ENCODE measurements at regions of chrX and their contacts with region 1.

Region 1: DNA sequence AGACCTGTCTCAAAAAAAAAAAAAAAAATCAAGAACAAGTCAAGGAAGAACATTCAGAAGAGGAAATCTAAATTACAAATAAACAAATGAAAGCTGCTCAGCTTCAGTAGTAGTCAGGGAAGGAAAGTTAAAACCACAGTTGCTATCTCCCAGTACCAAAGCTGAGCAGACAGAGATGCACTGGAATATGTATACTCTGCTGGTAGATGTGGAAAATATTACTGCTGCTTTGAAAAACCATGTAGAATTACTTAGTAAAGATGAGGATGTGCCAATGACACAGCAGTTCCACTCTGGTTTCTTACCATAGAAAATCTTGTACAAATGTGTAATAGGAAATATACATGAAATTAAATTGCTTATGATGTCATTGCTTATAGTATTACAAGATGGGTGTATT is 25.1 kb upstream of the PRKX start:
- DNase-seq: no peak
- H3K4me3 Mint-ChIP-seq: no peak overlapping the region
- H3K27ac Mint-ChIP-seq: peak overlapping the region; percentile 88
- H3K4me1 Mint-ChIP-seq: peaks cover 13% of the 10 kb centered on the region
- H3K27me3 Mint-ChIP-seq: no peaks in the 10 kb centered on the region

Region 2: DNA sequence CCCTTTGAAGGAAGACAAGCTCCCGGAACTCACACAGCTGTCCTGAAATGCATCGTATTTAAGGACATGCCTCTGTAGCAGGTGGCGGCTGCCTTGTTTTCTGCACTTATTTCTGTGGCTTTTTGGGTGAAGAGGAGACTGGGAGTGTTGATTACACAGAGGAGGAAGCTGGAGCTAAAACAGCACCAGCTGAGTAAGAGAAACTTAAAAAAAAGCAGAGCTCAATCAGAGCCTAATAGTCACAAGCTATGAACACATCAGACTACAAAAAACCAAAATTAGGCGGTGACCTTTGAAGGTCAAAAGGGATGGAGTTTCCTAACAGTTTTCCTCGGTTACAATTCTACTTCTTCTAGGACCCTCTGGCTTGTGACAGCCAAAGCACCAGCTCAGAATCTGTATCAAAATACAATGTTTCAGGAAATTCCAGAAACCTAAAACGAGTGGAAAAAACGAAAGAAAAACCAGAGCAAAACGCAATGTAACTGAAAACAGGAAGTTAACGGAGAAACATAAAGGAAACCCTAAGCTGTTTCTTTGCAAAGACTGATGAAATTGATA is 38.6 kb before region 1 on chrX:
- intact Hi-C with region 1: loop called (anchors 5 kb)
- DNase-seq: peak; percentile 61
- H3K4me3 Mint-ChIP-seq: peak overlapping the region; percentile 82
- H3K27ac Mint-ChIP-seq: peak overlapping the region; percentile 91
- H3K4me1 Mint-ChIP-seq: peaks cover 50% of the 10 kb centered on the region
- H3K27me3 Mint-ChIP-seq: no peaks in the 10 kb centered on the region

Region 3: DNA sequence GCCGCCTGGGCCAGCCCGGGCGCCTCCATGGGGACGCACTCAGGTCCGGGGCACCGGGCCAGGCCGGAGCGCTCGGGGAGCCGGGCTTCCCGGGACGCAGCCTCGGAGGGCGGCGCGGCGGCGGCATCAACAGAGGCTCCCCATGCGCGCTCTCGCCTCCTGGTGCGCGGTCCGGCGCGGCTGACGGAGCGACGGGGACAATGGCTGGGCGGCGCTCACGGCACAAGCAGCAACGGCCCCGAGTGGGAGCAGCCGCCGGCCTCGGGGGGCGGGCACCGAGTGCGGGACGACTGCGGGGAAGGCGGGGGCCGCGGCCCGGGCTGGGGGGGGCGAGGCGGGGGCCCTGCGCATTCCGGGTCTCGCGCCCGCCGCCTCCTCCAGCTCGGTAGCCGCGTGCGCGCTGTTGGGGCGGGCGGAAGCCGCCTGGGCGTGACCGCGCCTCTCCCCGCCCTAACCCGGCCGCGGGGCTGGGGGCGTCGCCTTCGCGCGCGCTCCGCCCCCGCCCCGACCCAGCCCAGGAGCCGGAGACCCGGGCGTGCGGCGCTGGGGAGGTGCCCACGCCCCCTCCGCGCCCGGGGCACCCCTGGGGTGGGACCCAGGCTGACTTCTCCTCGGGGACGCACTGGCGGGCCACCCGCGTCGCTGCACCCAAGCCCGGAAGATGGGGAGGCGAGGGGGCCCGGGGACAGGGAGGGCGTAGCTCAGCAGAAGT is 25.1 kb before region 1 on chrX and contains the start of gene PRKX:
- intact Hi-C with region 1: loop called (anchors 2 kb)
- DNase-seq: peak; percentile 93
- H3K4me3 Mint-ChIP-seq: peak within 1 kb of the TSS; percentile 97
- H3K27ac Mint-ChIP-seq: peak within 1 kb of the TSS; percentile 94
- H3K4me1 Mint-ChIP-seq: peaks cover 8% of the 10 kb centered on the region
- H3K27me3 Mint-ChIP-seq: no peaks in the 10 kb centered on the region
- total RNA-seq, gene PRKX: 61.3 and 62.3 TPM in 2 replicates